CD14-positive monocyte (primary cell): ENCODE measurements at regions of chr17 and their contacts with region 1.

Region 1: GRCh38 chr17:38667099-38667786 is 7.5 kb downstream of the EPOP start:
- DNase-seq: peak; percentile 61 to 72 (median 69)
- H3K4me3 ChIP-seq: no peak overlapping the region
- H3K4me3 Mint-ChIP-seq: peak overlapping the region in 1 of 2 donors; percentile 73
- H3K27ac ChIP-seq: no peak overlapping the region
- H3K27ac Mint-ChIP-seq: no peak overlapping the region
- H3K4me1 ChIP-seq: peaks cover 0 to under 1% of the 10 kb centered on the region in 2 donors
- H3K4me1 Mint-ChIP-seq: peaks cover 12% of the 10 kb centered on the region
- H3K27me3 ChIP-seq: peaks cover 39 to 57% of the 10 kb centered on the region in 2 donors
- H3K27me3 Mint-ChIP-seq: peaks cover 56 to 79% (median 62%) of the 10 kb centered on the region in 3 donors
- CTCF ChIP-seq: peak; percentile 100

Region 2: DNA sequence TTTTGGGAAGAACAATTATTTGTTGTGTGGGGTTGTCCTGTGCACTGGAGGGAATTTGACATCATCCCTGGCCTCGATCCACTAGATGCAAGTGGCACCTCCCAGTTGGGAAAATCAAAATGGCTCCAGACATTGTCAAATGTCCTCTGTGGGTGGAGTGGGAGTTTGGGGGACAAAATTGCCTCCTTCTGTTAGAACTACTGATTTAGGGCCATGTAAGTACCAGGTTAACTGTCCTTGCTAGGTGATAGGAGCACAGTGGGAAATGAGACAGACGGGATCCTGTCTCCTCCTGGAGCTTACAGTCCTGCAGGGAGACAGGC is 182.1 kb before region 1 on chr17:
- intact Hi-C with region 1: loop called in 1 of 2 experiments (anchors 5 kb)
- DNase-seq: no peak
- H3K4me3 ChIP-seq: no peak overlapping the region
- H3K4me3 Mint-ChIP-seq: no peak overlapping the region
- H3K27ac ChIP-seq: no peak overlapping the region
- H3K27ac Mint-ChIP-seq: no peak overlapping the region
- H3K4me1 ChIP-seq: no peaks in the 10 kb centered on the region
- H3K4me1 Mint-ChIP-seq: peaks cover 2% of the 10 kb centered on the region
- H3K27me3 ChIP-seq: no peaks in the 10 kb centered on the region
- H3K27me3 Mint-ChIP-seq: no peaks in the 10 kb centered on the region
- CTCF ChIP-seq: peak; percentile 0

Region 3: DNA sequence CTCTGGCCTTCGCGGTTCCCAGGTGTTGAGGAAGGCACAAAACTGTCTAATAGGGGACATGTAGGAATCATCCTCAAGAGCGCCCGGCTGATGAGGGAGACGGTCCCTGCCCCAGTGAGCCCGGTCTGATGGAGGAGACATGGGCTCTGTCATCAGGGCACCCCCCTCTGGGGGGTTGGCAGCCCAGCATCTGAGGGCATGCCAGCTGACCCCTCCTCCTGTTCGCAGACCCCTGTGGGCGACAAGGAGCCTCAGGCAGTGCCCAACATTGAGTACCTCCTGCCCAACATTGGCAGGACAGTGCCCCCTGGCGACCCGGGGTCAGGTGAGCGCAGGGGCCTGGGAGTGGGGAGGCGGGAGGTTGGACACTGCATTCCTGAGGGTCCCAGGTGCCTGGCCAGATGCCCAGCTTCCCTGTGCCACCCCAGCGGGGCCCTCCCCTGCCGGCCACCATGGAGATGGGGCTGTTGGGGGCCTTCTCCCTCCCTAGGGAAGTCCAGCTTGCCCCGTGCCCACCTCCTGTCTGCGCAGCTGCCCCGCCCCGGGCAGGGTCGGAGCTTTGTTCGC is 169.0 kb before region 1 on chr17:
- intact Hi-C with region 1: loop called (anchors 2 to 5 kb)
- DNase-seq: no peak
- H3K4me3 ChIP-seq: no peak overlapping the region
- H3K4me3 Mint-ChIP-seq: no peak overlapping the region
- H3K27ac ChIP-seq: no peak overlapping the region
- H3K27ac Mint-ChIP-seq: no peak overlapping the region
- H3K4me1 ChIP-seq: no peaks in the 10 kb centered on the region
- H3K4me1 Mint-ChIP-seq: no peaks in the 10 kb centered on the region
- H3K27me3 ChIP-seq: no peaks in the 10 kb centered on the region
- H3K27me3 Mint-ChIP-seq: peaks cover 0 to 2% (median 1%) of the 10 kb centered on the region in 3 donors
- CTCF ChIP-seq: no peak

Region 4: DNA sequence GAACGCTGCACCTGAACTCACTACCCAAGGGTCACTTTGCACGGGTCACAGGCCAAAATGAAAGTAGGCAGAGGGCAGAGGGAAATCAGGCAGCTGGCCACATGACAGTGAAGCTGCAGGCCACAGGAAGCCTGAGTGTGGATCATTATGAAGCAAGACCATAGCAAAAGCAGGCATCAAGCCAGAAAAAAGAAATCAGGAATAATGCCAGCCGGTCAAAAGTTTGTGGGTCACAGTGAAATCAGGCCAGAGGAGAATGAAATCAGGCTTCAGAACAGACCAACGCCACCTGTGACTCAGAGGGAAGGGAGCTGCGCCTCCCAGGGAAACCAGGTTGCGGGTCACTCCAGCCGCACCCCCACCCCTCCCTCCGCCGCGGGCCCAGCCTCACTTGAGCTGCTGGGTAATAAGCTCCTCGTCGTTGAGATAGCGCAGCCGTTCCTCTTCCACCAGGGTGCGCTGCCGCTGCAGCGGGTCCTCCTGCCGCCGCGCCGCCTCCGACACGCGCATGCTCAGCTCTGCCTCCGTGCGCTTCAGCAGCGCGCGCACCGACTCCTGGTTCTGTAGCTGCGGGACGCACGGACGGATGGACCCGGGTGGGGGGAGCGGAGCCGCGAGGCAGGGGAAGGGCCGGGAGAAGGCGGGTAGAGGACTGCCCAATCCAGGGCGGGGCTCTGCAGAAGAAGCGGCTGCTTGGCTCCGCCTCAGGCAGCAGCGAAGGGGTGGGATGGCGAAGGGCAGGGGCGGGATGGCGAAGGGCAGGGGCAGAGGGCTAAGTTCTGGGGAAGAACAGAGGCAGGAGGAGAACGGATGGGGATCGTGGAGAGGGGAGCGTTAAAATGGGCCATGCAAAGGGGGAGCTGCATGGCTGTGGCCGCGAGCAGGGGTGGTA is 109.2 kb before region 1 on chr17:
- intact Hi-C with region 1: loop called (anchors 5 to 10 kb)
- DNase-seq: peak; percentile 88 to 93 (median 88)
- H3K4me3 ChIP-seq: peak overlapping the region; percentile 3 to 75 (median 25)
- H3K4me3 Mint-ChIP-seq: peak overlapping the region; percentile 81 to 90
- H3K27ac ChIP-seq: no peak overlapping the region
- H3K27ac Mint-ChIP-seq: peak overlapping the region in 4 of 7 donors; percentile 19 to 83 (median 46)
- H3K4me1 ChIP-seq: peaks cover 38 to 48% of the 10 kb centered on the region in 2 donors
- H3K4me1 Mint-ChIP-seq: peaks cover 45% of the 10 kb centered on the region
- H3K27me3 ChIP-seq: peaks cover 26 to 43% of the 10 kb centered on the region in 2 donors
- H3K27me3 Mint-ChIP-seq: peaks cover 44 to 75% (median 47%) of the 10 kb centered on the region in 3 donors
- CTCF ChIP-seq: peak; percentile 81

Region 5: DNA sequence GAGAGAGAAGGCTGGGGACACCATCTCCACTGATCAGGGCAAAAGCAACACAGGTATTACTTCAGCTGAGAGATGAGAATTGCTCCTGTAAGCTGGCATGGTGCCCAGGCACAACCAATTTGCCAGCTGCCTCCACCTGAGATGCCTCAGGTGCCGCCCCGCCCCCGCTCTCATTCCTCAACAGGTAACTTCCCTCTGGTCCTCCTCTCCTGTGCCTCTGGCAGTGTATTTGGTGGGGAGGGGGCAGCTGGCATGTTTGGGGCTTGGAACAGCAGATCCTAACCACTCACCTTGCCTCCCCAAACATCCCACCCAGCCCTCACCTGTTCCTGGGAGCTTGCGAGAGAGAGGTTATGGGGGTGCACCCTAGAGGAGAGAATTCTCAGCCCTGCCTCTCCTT is 58.6 kb before region 1 on chr17:
- intact Hi-C with region 1: no loop called
- DNase-seq: no peak
- H3K4me3 ChIP-seq: no peak overlapping the region
- H3K4me3 Mint-ChIP-seq: peak overlapping the region in 1 of 2 donors; percentile 70
- H3K27ac ChIP-seq: no peak overlapping the region
- H3K27ac Mint-ChIP-seq: peak overlapping the region in 1 of 7 donors; percentile 62
- H3K4me1 ChIP-seq: peaks cover 7 to 10% of the 10 kb centered on the region in 2 donors
- H3K4me1 Mint-ChIP-seq: peaks cover 6% of the 10 kb centered on the region
- H3K27me3 ChIP-seq: peaks cover 41 to 88% of the 10 kb centered on the region in 2 donors
- H3K27me3 Mint-ChIP-seq: peaks cover 76 to 95% (median 80%) of the 10 kb centered on the region in 3 donors
- CTCF ChIP-seq: no peak

Region 6: DNA sequence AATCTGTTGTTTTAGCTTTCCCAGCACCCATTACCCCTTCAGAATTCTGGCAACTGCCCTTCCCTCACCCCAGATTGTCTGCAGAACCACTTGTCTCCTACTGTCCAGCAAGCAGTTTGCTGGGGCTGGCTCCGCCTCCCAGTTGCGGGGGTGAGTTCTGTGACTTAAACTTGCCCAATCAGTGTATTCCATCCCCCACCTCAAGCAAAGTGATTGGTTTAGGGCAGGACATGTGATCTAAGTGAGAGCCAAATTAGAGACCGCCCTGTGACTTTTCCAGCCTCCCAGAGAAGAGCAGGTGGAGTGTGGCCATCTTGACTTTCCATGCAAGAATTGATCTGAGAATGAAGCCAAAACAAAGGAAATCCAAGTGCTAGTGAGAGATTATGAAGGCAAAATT is 38.8 kb before region 1 on chr17:
- intact Hi-C with region 1: no loop called
- DNase-seq: no peak
- H3K4me3 ChIP-seq: no peak overlapping the region
- H3K4me3 Mint-ChIP-seq: no peak overlapping the region
- H3K27ac ChIP-seq: no peak overlapping the region
- H3K27ac Mint-ChIP-seq: no peak overlapping the region
- H3K4me1 ChIP-seq: peaks cover 2 to 5% of the 10 kb centered on the region in 2 donors
- H3K4me1 Mint-ChIP-seq: peaks cover 6% of the 10 kb centered on the region
- H3K27me3 ChIP-seq: peaks cover 4 to 6% of the 10 kb centered on the region in 2 donors
- H3K27me3 Mint-ChIP-seq: peaks cover 11 to 30% (median 17%) of the 10 kb centered on the region in 3 donors
- CTCF ChIP-seq: no peak